Activated naive CD4-positive, alpha-beta T cell treated with anti-CD3 and anti-CD28 coated beads, Interleukin-2, amount 10 ng/mL, durations not matched to agents 7 days and 5 days (primary cell): ENCODE measurements at regions of chr1 and their contacts with region 1.

Region 1: GRCh38 chr1:171984850-171985485 is 143.7 kb downstream of the DNM3 start:
- DNase-seq: no peak
- H3K4me3 Mint-ChIP-seq: no peak overlapping the region
- H3K27ac Mint-ChIP-seq: no peak overlapping the region
- H3K4me1 Mint-ChIP-seq: no peaks in the 10 kb centered on the region
- H3K27me3 Mint-ChIP-seq: no peaks in the 10 kb centered on the region

Region 2: GRCh38 chr1:171654942-171655745 is 329.8 kb before region 1 on chr1:
- CTCF ChIA-PET with region 1: interaction called, 24 read pairs
- DNase-seq: peak; percentile 84
- H3K4me3 Mint-ChIP-seq: peak overlapping the region; percentile 27
- H3K27ac Mint-ChIP-seq: no peak overlapping the region
- H3K4me1 Mint-ChIP-seq: peaks cover 13% of the 10 kb centered on the region
- H3K27me3 Mint-ChIP-seq: peaks cover 33% of the 10 kb centered on the region

Region 3: GRCh38 chr1:172002725-172003345 is 17.9 kb after region 1 on chr1:
- CTCF ChIA-PET with region 1: interaction called, 23 read pairs
- DNase-seq: peak; percentile 41
- H3K4me3 Mint-ChIP-seq: no peak overlapping the region
- H3K27ac Mint-ChIP-seq: no peak overlapping the region
- H3K4me1 Mint-ChIP-seq: no peaks in the 10 kb centered on the region
- H3K27me3 Mint-ChIP-seq: no peaks in the 10 kb centered on the region

Region 4: GRCh38 chr1:172203135-172203823 is 218.3 kb after region 1 on chr1:
- CTCF ChIA-PET with region 1: no interaction called
- DNase-seq: no peak
- H3K4me3 Mint-ChIP-seq: no peak overlapping the region
- H3K27ac Mint-ChIP-seq: no peak overlapping the region
- H3K4me1 Mint-ChIP-seq: no peaks in the 10 kb centered on the region
- H3K27me3 Mint-ChIP-seq: no peaks in the 10 kb centered on the region

Region 5: GRCh38 chr1:172429331-172430127 is 444.6 kb after region 1 on chr1:
- CTCF ChIA-PET with region 1: interaction called, 23 read pairs
- DNase-seq: peak; percentile 73
- H3K4me3 Mint-ChIP-seq: no peak overlapping the region
- H3K27ac Mint-ChIP-seq: peak overlapping the region; percentile 43
- H3K4me1 Mint-ChIP-seq: peaks cover 25% of the 10 kb centered on the region
- H3K27me3 Mint-ChIP-seq: no peaks in the 10 kb centered on the region